CD4-positive, alpha-beta T cell (primary cell): ENCODE measurements at regions of chr19 and their contacts with region 1.

Region 1: GRCh38 chr19:38402967-38403861 is at the start of gene FAM98C:
- DNase-seq: peak; percentile 96 to 99 (median 98)
- ATAC-seq: peak; percentile 95
- H3K4me3 ChIP-seq: peak within 1 kb of the TSS; percentile 74
- H3K4me3 Mint-ChIP-seq: peak within 1 kb of the TSS; percentile 97
- H3K27ac ChIP-seq: peak within 1 kb of the TSS; percentile 75 to 81
- H3K27ac Mint-ChIP-seq: peak within 1 kb of the TSS; percentile 91
- H3K4me1 ChIP-seq: peaks cover 26% of the 10 kb centered on the region
- H3K4me1 Mint-ChIP-seq: peaks cover 16% of the 10 kb centered on the region
- H3K27me3 ChIP-seq: no peaks in the 10 kb centered on the region
- H3K27me3 Mint-ChIP-seq: no peaks in the 10 kb centered on the region
- CTCF ChIP-seq: peak; percentile 97
- total RNA-seq, gene FAM98C: 33.2 to 36.1 TPM

Region 2: GRCh38 chr19:37803250-37803854 is 599.9 kb before region 1 on chr19:
- CTCF ChIA-PET with region 1: no interaction called
- POLR2A ChIA-PET with region 1: no interaction called
- intact Hi-C with region 1: no loop called
- DNase-seq: no peak
- ATAC-seq: no peak
- H3K4me3 ChIP-seq: no peak overlapping the region
- H3K4me3 Mint-ChIP-seq: no peak overlapping the region
- H3K27ac ChIP-seq: no peak overlapping the region
- H3K27ac Mint-ChIP-seq: no peak overlapping the region
- H3K4me1 ChIP-seq: no peaks in the 10 kb centered on the region
- H3K4me1 Mint-ChIP-seq: no peaks in the 10 kb centered on the region
- H3K27me3 ChIP-seq: no peaks in the 10 kb centered on the region
- H3K27me3 Mint-ChIP-seq: no peaks in the 10 kb centered on the region
- CTCF ChIP-seq: no peak

Region 3: GRCh38 chr19:38387550-38388348 is 15.5 kb before region 1 on chr19 and contains the start of gene GGN:
- CTCF ChIA-PET with region 1: interaction called, 45 read pairs
- POLR2A ChIA-PET with region 1: interaction called, 44 read pairs
- intact Hi-C with region 1: loop called in 1 of 2 experiments (anchors 2 kb)
- DNase-seq: peak; percentile 59 to 91 (median 75)
- ATAC-seq: peak; percentile 74
- H3K4me3 ChIP-seq: peak within 1 kb of the TSS; percentile 58
- H3K4me3 Mint-ChIP-seq: peak within 1 kb of the TSS; percentile 94
- H3K27ac ChIP-seq: no peak within 1 kb of the TSS
- H3K27ac Mint-ChIP-seq: peak within 1 kb of the TSS; percentile 70
- H3K4me1 ChIP-seq: peaks cover 44% of the 10 kb centered on the region
- H3K4me1 Mint-ChIP-seq: peaks cover 29% of the 10 kb centered on the region
- H3K27me3 ChIP-seq: peaks cover 17 to 18% of the 10 kb centered on the region in 2 experiments
- H3K27me3 Mint-ChIP-seq: peaks cover 39% of the 10 kb centered on the region
- CTCF ChIP-seq: no peak
- total RNA-seq, gene GGN: 0.17 to 0.19 TPM

Region 4: DNA sequence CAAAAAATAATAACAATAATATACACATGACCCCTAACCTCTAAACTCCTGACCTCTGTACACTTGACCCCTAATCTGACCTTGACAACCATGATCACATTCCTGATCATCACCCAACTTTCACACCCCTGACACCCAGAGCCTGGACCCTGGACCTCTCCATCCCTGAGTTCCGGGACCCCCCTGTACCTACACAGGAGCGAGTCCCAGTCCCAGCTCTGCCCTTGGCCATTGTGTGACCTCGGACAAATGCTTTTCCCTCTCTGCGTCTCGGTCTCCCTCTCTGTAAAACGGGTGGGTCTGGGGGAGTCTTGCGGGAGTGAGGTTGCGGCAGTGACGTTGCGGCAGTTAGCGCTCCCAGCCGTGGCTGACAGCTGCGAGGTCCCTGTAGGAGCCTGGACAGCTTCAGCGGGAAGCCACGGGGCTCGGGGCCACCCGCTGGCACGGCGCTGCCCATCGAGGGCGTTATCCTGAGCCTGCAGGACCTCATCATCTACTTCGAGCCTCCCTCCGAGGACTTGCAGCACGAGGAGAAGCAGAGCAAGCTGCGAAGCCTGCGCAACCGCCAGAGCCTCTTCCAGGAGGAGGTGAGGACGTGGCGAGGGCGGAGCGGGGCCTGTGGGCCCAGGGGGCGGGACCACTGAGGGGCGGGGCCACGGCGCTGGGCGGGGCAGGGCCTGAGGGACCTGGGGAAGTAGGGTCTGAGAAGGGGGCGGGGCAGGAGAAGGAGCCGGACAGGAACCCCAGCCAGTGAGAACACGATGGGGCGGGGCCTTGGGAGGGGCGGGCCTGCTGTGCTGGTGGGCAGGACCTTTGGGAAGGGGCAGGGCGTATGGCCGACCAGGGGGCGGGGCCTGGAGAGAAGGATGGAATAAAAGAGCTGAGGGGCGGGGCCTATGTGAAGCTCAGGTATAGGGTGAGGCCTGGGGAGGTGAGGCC is 49.5 kb after region 1 on chr19:
- CTCF ChIA-PET with region 1: no interaction called
- POLR2A ChIA-PET with region 1: no interaction called
- intact Hi-C with region 1: no loop called
- DNase-seq: peak in 1 of 14 experiments; percentile 34
- ATAC-seq: no peak
- H3K4me3 ChIP-seq: no peak overlapping the region
- H3K4me3 Mint-ChIP-seq: no peak overlapping the region
- H3K27ac ChIP-seq: no peak overlapping the region
- H3K27ac Mint-ChIP-seq: no peak overlapping the region
- H3K4me1 ChIP-seq: no peaks in the 10 kb centered on the region
- H3K4me1 Mint-ChIP-seq: no peaks in the 10 kb centered on the region
- H3K27me3 ChIP-seq: no peaks in the 10 kb centered on the region
- H3K27me3 Mint-ChIP-seq: peaks cover 5% of the 10 kb centered on the region
- CTCF ChIP-seq: no peak

Region 5: DNA sequence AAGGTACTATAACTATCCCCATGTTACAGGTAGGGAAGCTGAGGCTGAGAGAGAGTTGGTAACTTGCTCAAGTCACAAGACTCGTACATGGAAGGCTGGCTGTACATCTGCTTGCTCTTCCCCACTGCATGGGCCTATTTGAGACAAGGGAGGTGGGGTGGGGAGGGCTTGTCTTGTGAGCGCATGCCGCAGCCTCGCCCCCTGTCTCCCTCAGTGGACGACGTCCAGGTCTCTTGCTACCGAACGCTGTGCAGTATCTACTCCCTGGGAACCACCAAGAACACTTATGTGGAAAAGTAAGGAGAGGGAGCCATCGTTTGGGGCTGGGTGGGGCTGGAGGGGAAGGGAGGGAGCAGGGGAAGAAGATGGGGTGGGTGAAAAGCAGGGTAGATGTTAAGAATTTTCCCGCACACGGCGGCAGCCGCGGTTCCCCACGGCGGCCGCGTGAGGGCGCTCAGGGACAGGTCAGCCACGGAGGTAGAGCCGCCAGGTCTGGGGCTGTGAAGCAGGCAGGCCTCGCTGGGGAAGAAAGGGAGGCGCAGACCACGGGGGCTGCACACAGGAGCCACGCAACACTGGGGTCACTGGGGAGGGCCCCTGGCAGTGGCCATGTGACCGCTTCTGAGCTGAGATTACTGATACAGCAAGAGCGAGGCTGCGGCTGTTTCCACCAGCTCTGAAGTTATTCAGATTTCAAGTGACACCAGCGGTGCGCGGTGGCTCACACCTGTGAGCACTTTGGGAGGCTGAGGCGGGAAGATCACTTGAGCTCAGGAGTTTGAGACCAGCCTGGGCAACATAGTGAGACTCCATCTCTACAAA is 111.8 kb after region 1 on chr19:
- CTCF ChIA-PET with region 1: interaction called, 15 read pairs
- POLR2A ChIA-PET with region 1: interaction called, 7 read pairs
- intact Hi-C with region 1: loop called (anchors 1 to 5 kb)
- DNase-seq: peak; percentile 62 to 88 (median 76)
- ATAC-seq: peak; percentile 98
- H3K4me3 ChIP-seq: no peak overlapping the region
- H3K4me3 Mint-ChIP-seq: no peak overlapping the region
- H3K27ac ChIP-seq: no peak overlapping the region
- H3K27ac Mint-ChIP-seq: no peak overlapping the region
- H3K4me1 ChIP-seq: peaks cover 15% of the 10 kb centered on the region
- H3K4me1 Mint-ChIP-seq: peaks cover 9% of the 10 kb centered on the region
- H3K27me3 ChIP-seq: no peaks in the 10 kb centered on the region
- H3K27me3 Mint-ChIP-seq: no peaks in the 10 kb centered on the region
- CTCF ChIP-seq: peak; percentile 94

Region 6: DNA sequence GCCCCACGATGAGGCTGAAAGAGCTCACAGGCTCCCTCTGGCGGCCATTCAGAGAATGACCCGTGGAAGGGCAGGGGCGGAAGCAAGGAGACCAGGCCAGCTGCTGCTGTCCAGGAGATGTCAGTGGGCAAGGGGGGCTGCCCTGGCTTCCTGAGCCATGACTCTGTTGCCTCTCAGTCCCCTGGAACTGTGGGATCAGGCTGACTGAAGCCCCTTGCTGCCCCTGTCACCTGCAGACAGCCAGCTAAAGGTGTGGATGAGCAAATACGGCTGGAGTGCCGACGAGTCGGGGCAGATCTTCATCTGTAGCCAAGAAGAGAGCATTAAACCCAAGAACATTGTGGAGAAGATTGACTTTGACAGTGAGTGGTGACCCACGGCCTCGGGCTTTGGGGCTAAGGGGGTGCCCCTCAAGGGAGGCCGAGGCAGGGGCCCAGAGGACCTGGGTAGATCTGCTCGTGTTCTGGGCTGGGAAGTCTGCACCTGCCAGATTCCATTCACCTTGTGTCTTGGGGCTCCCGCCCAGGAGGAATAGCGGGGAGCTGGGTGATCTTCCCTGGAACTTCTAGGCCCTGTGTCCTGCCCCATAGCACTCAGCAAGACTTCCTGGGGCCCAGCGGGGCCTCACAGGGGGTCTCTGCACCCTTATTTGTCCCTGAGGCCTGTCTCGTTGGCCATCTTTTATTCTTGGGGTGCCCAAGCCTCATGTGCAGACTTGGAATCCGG is 231.7 kb after region 1 on chr19:
- CTCF ChIA-PET with region 1: interaction called, 40 read pairs
- POLR2A ChIA-PET with region 1: interaction called, 10 read pairs
- intact Hi-C with region 1: loop called in 1 of 2 experiments (anchors 1 kb)
- DNase-seq: peak; percentile 60 to 84 (median 67)
- ATAC-seq: no peak
- H3K4me3 ChIP-seq: no peak overlapping the region
- H3K4me3 Mint-ChIP-seq: peak overlapping the region; percentile 11
- H3K27ac ChIP-seq: no peak overlapping the region
- H3K27ac Mint-ChIP-seq: peak overlapping the region; percentile 74
- H3K4me1 ChIP-seq: peaks cover 28% of the 10 kb centered on the region
- H3K4me1 Mint-ChIP-seq: peaks cover 35% of the 10 kb centered on the region
- H3K27me3 ChIP-seq: no peaks in the 10 kb centered on the region
- H3K27me3 Mint-ChIP-seq: no peaks in the 10 kb centered on the region
- CTCF ChIP-seq: peak; percentile 95

Region 7: GRCh38 chr19:38849860-38850435 is 446.7 kb after region 1 on chr19 and contains the start of gene HNRNPL:
- CTCF ChIA-PET with region 1: no interaction called
- POLR2A ChIA-PET with region 1: interaction called, 11 read pairs
- intact Hi-C with region 1: no loop called
- DNase-seq: peak; percentile 98 to 100 (median 99)
- ATAC-seq: peak; percentile 69
- H3K4me3 ChIP-seq: peak within 1 kb of the TSS; percentile 76
- H3K4me3 Mint-ChIP-seq: peak within 1 kb of the TSS; percentile 98
- H3K27ac ChIP-seq: peak within 1 kb of the TSS; percentile 95 to 97
- H3K27ac Mint-ChIP-seq: peak within 1 kb of the TSS; percentile 97
- H3K4me1 ChIP-seq: peaks cover 66% of the 10 kb centered on the region
- H3K4me1 Mint-ChIP-seq: peaks cover 63% of the 10 kb centered on the region
- H3K27me3 ChIP-seq: no peaks in the 10 kb centered on the region
- H3K27me3 Mint-ChIP-seq: no peaks in the 10 kb centered on the region
- CTCF ChIP-seq: peak; percentile 16
- total RNA-seq, gene HNRNPL: 535 to 565 TPM

Region 8: GRCh38 chr19:38929929-38930775 is 526.9 kb after region 1 on chr19 and contains the start of gene SARS2:
- CTCF ChIA-PET with region 1: interaction called, 23 read pairs
- POLR2A ChIA-PET with region 1: interaction called, 53 read pairs
- intact Hi-C with region 1: loop called (anchors 1 kb)
- DNase-seq: peak; percentile 87 to 97 (median 92)
- ATAC-seq: peak; percentile 68
- H3K4me3 ChIP-seq: peak within 1 kb of the TSS; percentile 79
- H3K4me3 Mint-ChIP-seq: peak within 1 kb of the TSS; percentile 99
- H3K27ac ChIP-seq: peak within 1 kb of the TSS; percentile 86 to 87
- H3K27ac Mint-ChIP-seq: peak within 1 kb of the TSS; percentile 100
- H3K4me1 ChIP-seq: peaks cover 46% of the 10 kb centered on the region
- H3K4me1 Mint-ChIP-seq: peaks cover 39% of the 10 kb centered on the region
- H3K27me3 ChIP-seq: no peaks in the 10 kb centered on the region
- H3K27me3 Mint-ChIP-seq: no peaks in the 10 kb centered on the region
- CTCF ChIP-seq: peak; percentile 100
- total RNA-seq, gene SARS2: 18.7 to 22.8 TPM